ENCODE measurements at regions of chr1 and their contacts with region 1.

Region 1: DNA sequence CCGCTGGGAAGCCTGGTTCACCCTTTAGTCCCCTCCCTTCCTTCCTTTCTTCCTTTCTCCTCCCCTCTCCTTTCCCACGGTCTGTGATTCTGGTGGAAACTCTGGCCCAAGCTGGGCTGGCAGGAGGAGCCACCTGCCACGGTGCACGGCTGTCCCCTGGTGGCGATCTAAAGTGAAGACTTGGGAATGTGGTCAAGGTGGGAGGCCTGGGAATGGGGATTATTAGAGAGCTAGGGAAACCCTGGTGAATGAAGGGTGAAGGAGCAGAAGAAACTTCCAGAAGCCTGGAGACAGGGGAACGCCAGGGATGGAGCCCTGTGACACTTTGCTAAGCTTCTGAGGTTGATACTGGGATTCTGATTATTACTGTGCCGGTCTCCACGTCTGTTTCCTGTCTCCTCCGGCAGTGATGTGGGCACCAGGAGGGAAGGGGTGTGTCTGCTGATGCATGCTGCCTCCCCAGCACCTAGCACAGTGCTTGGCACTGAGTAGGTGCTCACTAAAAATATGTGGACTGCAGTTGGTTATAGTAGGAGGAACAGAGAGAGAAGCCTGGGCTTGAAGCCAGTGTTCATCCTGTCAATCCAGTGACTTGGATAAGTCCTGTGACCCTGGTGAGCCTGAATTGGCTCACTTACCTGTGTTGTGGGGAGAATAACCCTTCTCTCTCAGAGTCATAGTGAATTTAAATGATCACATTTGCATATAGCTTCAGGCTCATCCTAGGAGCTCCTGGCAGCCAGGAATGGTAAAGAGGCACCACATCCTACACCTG is 71.2 kb upstream of the NBPF3 start:
- DNase-seq: peak; percentile 34 to 84 (median 65)
- ATAC-seq: peak; percentile 73
- H3K4me3 ChIP-seq: no peak overlapping the region
- H3K4me3 Mint-ChIP-seq: no peak overlapping the region
- H3K27ac ChIP-seq: no peak overlapping the region
- H3K27ac Mint-ChIP-seq: no peak overlapping the region
- H3K4me1 ChIP-seq: peaks cover 6% of the 10 kb centered on the region
- H3K4me1 Mint-ChIP-seq: peaks cover 10% of the 10 kb centered on the region
- H3K27me3 ChIP-seq: no peaks in the 10 kb centered on the region
- H3K27me3 Mint-ChIP-seq: no peaks in the 10 kb centered on the region
- CTCF ChIP-seq: peak; percentile 99

Region 2: DNA sequence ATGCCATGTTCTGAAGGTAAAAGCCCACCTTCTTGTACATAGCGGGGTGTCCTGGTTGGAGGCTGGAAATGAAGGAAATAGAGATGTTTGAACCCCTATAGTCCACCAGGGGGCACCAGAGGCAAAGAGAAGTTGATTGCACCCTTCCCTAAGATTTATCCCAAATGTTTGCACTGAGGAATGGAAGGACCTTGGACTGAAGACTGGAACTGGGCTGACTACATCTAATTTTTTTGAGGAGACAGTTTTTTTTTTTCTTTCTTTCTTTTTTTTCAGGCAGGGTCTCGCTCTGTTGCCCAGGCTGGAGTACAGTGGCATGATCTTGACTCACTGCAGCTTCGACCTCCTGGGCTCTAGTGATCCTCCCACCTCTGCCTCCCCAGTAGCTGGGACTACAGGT is 136.7 kb before region 1 on chr1:
- CTCF ChIA-PET with region 1: interaction called, 182 read pairs
- POLR2A ChIA-PET with region 1: interaction called, 3 read pairs
- intact Hi-C with region 1: loop called (anchors 1 kb)
- DNase-seq: peak in 4 of 9 experiments; percentile 32 to 69 (median 52)
- ATAC-seq: peak; percentile 73
- H3K4me3 ChIP-seq: no peak overlapping the region
- H3K4me3 Mint-ChIP-seq: no peak overlapping the region
- H3K27ac ChIP-seq: no peak overlapping the region
- H3K27ac Mint-ChIP-seq: no peak overlapping the region
- H3K4me1 ChIP-seq: no peaks in the 10 kb centered on the region
- H3K4me1 Mint-ChIP-seq: no peaks in the 10 kb centered on the region
- H3K27me3 ChIP-seq: no peaks in the 10 kb centered on the region
- H3K27me3 Mint-ChIP-seq: no peaks in the 10 kb centered on the region
- CTCF ChIP-seq: peak; percentile 90

Region 3: GRCh38 chr1:21255278-21255942 is 113.3 kb before region 1 on chr1:
- CTCF ChIA-PET with region 1: interaction called, 455 read pairs
- POLR2A ChIA-PET with region 1: interaction called, 16 read pairs
- intact Hi-C with region 1: loop called in 1 of 2 experiments (anchors 1 kb)
- DNase-seq: peak; percentile 73 to 92 (median 83)
- ATAC-seq: peak; percentile 82
- H3K4me3 ChIP-seq: no peak overlapping the region
- H3K4me3 Mint-ChIP-seq: no peak overlapping the region
- H3K27ac ChIP-seq: no peak overlapping the region
- H3K27ac Mint-ChIP-seq: peak overlapping the region; percentile 77
- H3K4me1 ChIP-seq: peaks cover 21% of the 10 kb centered on the region
- H3K4me1 Mint-ChIP-seq: peaks cover 29% of the 10 kb centered on the region
- H3K27me3 ChIP-seq: no peaks in the 10 kb centered on the region
- H3K27me3 Mint-ChIP-seq: no peaks in the 10 kb centered on the region
- CTCF ChIP-seq: peak; percentile 63

Region 4: GRCh38 chr1:21287905-21288514 is 80.7 kb before region 1 on chr1:
- CTCF ChIA-PET with region 1: interaction called, 24 read pairs
- POLR2A ChIA-PET with region 1: interaction called, 3 read pairs
- intact Hi-C with region 1: no loop called
- DNase-seq: no peak
- ATAC-seq: no peak
- H3K4me3 ChIP-seq: no peak overlapping the region
- H3K4me3 Mint-ChIP-seq: peak overlapping the region; percentile 40
- H3K27ac ChIP-seq: no peak overlapping the region
- H3K27ac Mint-ChIP-seq: peak overlapping the region; percentile 37
- H3K4me1 ChIP-seq: peaks cover 50% of the 10 kb centered on the region
- H3K4me1 Mint-ChIP-seq: peaks cover 51% of the 10 kb centered on the region
- H3K27me3 ChIP-seq: no peaks in the 10 kb centered on the region
- H3K27me3 Mint-ChIP-seq: no peaks in the 10 kb centered on the region
- CTCF ChIP-seq: no peak

Region 5: GRCh38 chr1:21334214-21335087 is 34.3 kb before region 1 on chr1:
- CTCF ChIA-PET with region 1: interaction called, 20 read pairs
- POLR2A ChIA-PET with region 1: no interaction called
- intact Hi-C with region 1: no loop called
- DNase-seq: peak; percentile 68 to 94 (median 84)
- ATAC-seq: peak; percentile 86
- H3K4me3 ChIP-seq: peak overlapping the region; percentile 29 to 47
- H3K4me3 Mint-ChIP-seq: peak overlapping the region; percentile 88
- H3K27ac ChIP-seq: peak overlapping the region; percentile 57 to 89
- H3K27ac Mint-ChIP-seq: peak overlapping the region; percentile 98
- H3K4me1 ChIP-seq: peaks cover 84% of the 10 kb centered on the region
- H3K4me1 Mint-ChIP-seq: peaks cover 85% of the 10 kb centered on the region
- H3K27me3 ChIP-seq: no peaks in the 10 kb centered on the region
- H3K27me3 Mint-ChIP-seq: no peaks in the 10 kb centered on the region
- CTCF ChIP-seq: peak; percentile 58

Region 6: DNA sequence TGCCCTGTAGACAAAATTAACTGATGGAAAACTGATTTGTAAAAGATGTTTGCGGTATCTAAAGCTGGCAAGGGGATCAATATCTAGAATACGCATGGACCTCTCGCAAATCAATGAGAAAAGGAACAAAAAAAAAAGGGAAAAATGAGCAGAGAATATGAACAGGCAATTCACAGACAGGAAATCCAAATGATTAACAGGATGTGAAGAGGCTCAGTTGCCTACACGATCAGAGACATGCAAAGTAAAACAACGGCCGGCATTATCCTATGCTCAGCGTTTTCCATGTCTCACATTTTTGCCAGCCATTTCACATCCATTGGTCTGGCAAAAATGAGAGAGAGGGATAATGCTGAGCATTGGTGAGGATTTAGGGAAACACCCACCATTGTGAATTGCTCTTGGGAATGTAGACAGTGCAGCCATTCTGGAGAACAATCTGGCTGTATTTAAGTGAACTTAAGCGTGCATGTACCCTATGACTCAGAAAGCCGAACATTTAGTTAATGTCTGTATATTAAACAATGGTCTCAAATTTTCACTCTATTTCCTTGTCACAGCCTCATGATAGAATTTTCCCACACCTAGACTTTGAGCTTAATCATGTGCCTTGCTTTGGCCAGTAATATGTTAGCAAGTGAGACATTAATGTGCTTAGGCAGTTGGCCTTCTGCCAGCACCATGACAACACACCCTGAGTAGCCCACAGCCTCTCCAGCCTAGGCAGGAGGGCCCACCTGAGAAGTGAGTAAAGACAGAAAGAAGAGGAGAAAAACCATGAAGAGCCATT is 10.2 kb after region 1 on chr1:
- CTCF ChIA-PET with region 1: interaction called, 36 read pairs
- POLR2A ChIA-PET with region 1: no interaction called
- intact Hi-C with region 1: no loop called
- DNase-seq: no peak
- ATAC-seq: no peak
- H3K4me3 ChIP-seq: no peak overlapping the region
- H3K4me3 Mint-ChIP-seq: no peak overlapping the region
- H3K27ac ChIP-seq: no peak overlapping the region
- H3K27ac Mint-ChIP-seq: no peak overlapping the region
- H3K4me1 ChIP-seq: no peaks in the 10 kb centered on the region
- H3K4me1 Mint-ChIP-seq: no peaks in the 10 kb centered on the region
- H3K27me3 ChIP-seq: no peaks in the 10 kb centered on the region
- H3K27me3 Mint-ChIP-seq: peaks cover 8% of the 10 kb centered on the region
- CTCF ChIP-seq: no peak